ENCODE measurements at regions of chr1 and their contacts with region 1.

Region 1: GRCh38 chr1:181479137-181479745 is 4.1 kb upstream of the CACNA1E start:
- DNase-seq: peak; percentile 28 to 32
- ATAC-seq: peak; percentile 75 to 91 (median 82)
- H3K4me3 ChIP-seq: no peak overlapping the region
- H3K27ac ChIP-seq: no peak overlapping the region
- H3K4me1 ChIP-seq: peaks cover 0 to 16% (median 6%) of the 10 kb centered on the region in 9 donors
- H3K27me3 ChIP-seq: peaks cover 16 to 98% (median 86%) of the 10 kb centered on the region in 7 donors
- CTCF ChIP-seq: peak; percentile 53 to 88 (median 80)

Region 2: DNA sequence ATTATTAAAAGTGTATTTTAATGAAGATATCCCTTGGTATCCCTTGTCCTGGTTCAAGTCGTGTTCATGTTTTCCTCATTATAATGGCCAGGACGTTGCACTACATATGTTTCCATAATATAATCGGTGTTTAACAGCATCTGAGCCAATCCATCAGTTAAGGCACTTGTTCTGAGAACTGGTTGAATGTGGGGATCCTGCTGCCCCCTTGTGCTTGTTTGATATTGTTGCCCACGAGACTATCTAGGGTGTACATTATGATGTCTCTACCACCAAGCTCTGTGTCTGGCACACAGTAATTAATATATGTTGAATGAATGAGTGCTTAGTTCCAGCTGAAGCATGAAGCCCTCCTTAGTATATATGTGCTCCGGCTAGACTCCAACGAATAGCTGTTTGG is 197.0 kb after region 1 on chr1:
- intact Hi-C with region 1: loop called in 9 of 10 experiments (anchors 1 to 10 kb)
- DNase-seq: no peak
- ATAC-seq: no peak
- H3K4me3 ChIP-seq: no peak overlapping the region
- H3K27ac ChIP-seq: no peak overlapping the region
- H3K4me1 ChIP-seq: no peaks in the 10 kb centered on the region
- H3K27me3 ChIP-seq: peaks cover 0 to 56% (median 35%) of the 10 kb centered on the region in 7 donors
- CTCF ChIP-seq: peak in 7 of 9 donors; percentile 27 to 55 (median 45)

Region 3: GRCh38 chr1:181936768-181937581 is 457.7 kb after region 1 on chr1:
- intact Hi-C with region 1: loop called in 8 of 10 experiments (anchors 2 to 10 kb)
- DNase-seq: peak in 1 of 2 donors; percentile 15
- ATAC-seq: peak in 2 of 8 donors; percentile 33 to 56
- H3K4me3 ChIP-seq: no peak overlapping the region
- H3K27ac ChIP-seq: no peak overlapping the region
- H3K4me1 ChIP-seq: no peaks in the 10 kb centered on the region
- H3K27me3 ChIP-seq: peaks cover 0 to 11% (median 3%) of the 10 kb centered on the region in 7 donors
- CTCF ChIP-seq: peak in 8 of 9 donors; percentile 11 to 62 (median 49)

Region 4: GRCh38 chr1:182054698-182055326 is 575.6 kb after region 1 on chr1:
- intact Hi-C with region 1: loop called in 5 of 10 experiments (anchors 5 to 10 kb)
- DNase-seq: peak in 1 of 2 donors; percentile 34
- ATAC-seq: no peak
- H3K4me3 ChIP-seq: no peak overlapping the region
- H3K27ac ChIP-seq: no peak overlapping the region
- H3K4me1 ChIP-seq: peaks cover 0 to 6% (median 0%) of the 10 kb centered on the region in 9 donors
- H3K27me3 ChIP-seq: peaks cover 0 to 53% (median 40%) of the 10 kb centered on the region in 7 donors
- CTCF ChIP-seq: peak in 7 of 9 donors; percentile 34 to 66 (median 51)

Region 5: DNA sequence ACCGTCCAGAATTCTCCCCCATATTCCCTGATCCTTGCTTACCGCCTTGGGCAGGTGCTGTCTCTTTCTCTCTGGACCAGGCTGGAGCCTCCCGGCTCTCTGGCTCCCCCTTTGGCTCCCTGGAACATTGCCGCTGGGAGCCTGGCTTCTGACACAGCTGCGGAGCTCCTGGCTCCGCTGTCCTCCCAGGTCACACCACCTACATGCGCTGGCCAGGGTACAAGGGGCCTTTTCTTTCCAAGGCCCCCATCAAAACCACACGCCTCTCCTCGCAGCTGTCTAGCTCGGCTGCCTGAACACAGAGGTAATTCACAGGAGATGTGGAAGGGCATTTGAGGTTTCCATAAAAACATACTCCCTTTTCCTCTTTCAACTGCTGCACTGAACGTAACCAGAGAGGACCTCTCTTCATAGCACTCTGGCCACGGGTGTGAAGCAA is 589.8 kb after region 1 on chr1:
- intact Hi-C with region 1: loop called in 2 of 10 experiments (anchors 10 kb)
- DNase-seq: peak; percentile 29 to 59
- ATAC-seq: peak in 6 of 8 donors; percentile 55 to 78 (median 66)
- H3K4me3 ChIP-seq: no peak overlapping the region
- H3K27ac ChIP-seq: no peak overlapping the region
- H3K4me1 ChIP-seq: peaks cover 0 to 5% (median 0%) of the 10 kb centered on the region in 9 donors
- H3K27me3 ChIP-seq: peaks cover 0 to 43% (median 17%) of the 10 kb centered on the region in 7 donors
- CTCF ChIP-seq: peak; percentile 21 to 79 (median 70)